ENCODE measurements at regions of chr11 and their contacts with region 1.

Region 1: DNA sequence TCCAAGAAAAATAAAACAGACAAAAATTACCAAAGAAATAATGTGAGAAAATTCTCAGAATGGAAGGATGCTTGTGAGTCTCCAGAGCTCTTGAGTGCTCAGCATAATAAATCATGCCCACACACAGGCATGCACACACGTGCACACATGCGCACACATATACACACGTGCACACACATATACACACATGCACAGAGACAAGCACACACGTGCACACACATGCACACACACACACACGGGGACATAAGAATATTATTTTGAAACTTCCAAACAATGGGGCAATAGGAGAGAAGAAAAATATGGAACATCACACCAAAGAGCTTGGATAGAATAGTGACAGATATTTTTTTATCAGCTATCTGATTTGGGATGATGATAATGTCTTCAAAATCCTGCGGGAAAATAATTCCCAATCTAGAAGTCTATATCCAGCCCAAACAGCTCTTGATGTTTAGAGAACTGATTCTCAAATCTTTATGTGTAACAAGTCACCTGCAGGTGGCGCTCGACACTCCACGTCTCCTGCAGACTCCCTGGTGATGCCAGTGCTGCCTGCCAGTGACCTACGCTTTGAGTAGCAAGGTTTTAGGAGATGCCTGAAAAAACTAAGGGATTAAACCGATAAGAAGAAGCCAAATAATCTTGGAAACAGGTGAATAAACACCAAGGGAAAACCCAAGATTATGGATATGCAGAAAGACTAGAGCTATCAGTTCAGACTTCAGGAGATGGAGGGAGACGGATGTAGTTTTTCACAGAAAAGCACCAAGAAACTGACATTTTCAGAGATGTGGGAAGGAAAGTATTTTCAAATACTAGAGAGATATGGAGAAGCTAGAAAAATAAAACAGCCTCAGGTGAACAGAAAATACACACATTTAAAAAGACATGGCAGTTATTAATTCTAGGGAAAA is 743.6 kb downstream of the ETS1 start:
- DNase-seq: peak; percentile 19 to 66
- ATAC-seq: peak in 1 of 3 donors; percentile 48
- H3K4me3 ChIP-seq: no peak overlapping the region
- H3K4me3 Mint-ChIP-seq: no peak overlapping the region
- H3K27ac ChIP-seq: no peak overlapping the region
- H3K27ac Mint-ChIP-seq: no peak overlapping the region
- H3K4me1 ChIP-seq: no peaks in the 10 kb centered on the region
- H3K4me1 Mint-ChIP-seq: no peaks in the 10 kb centered on the region
- H3K27me3 ChIP-seq: no peaks in the 10 kb centered on the region
- H3K27me3 Mint-ChIP-seq: peaks cover under 1 to 4% of the 10 kb centered on the region in 2 donors
- CTCF ChIP-seq: peak; percentile 67

Region 2: GRCh38 chr11:128021349-128022006 is 177.7 kb after region 1 on chr11:
- intact Hi-C with region 1: no loop called
- DNase-seq: no peak
- ATAC-seq: no peak
- H3K4me3 ChIP-seq: no peak overlapping the region
- H3K4me3 Mint-ChIP-seq: no peak overlapping the region
- H3K27ac ChIP-seq: no peak overlapping the region
- H3K27ac Mint-ChIP-seq: no peak overlapping the region
- H3K4me1 ChIP-seq: no peaks in the 10 kb centered on the region
- H3K4me1 Mint-ChIP-seq: no peaks in the 10 kb centered on the region
- H3K27me3 ChIP-seq: no peaks in the 10 kb centered on the region
- H3K27me3 Mint-ChIP-seq: peaks cover 16 to 18% of the 10 kb centered on the region in 2 donors
- CTCF ChIP-seq: no peak

Region 3: GRCh38 chr11:128412847-128413791 is 569.4 kb after region 1 on chr11:
- intact Hi-C with region 1: no loop called
- DNase-seq: no peak
- ATAC-seq: no peak
- H3K4me3 ChIP-seq: no peak overlapping the region
- H3K4me3 Mint-ChIP-seq: no peak overlapping the region
- H3K27ac ChIP-seq: no peak overlapping the region
- H3K27ac Mint-ChIP-seq: no peak overlapping the region
- H3K4me1 ChIP-seq: no peaks in the 10 kb centered on the region
- H3K4me1 Mint-ChIP-seq: peaks cover 0 to 12% of the 10 kb centered on the region in 2 donors
- H3K27me3 ChIP-seq: no peaks in the 10 kb centered on the region
- H3K27me3 Mint-ChIP-seq: peaks cover 4 to 5% of the 10 kb centered on the region in 2 donors
- CTCF ChIP-seq: no peak

Region 4: DNA sequence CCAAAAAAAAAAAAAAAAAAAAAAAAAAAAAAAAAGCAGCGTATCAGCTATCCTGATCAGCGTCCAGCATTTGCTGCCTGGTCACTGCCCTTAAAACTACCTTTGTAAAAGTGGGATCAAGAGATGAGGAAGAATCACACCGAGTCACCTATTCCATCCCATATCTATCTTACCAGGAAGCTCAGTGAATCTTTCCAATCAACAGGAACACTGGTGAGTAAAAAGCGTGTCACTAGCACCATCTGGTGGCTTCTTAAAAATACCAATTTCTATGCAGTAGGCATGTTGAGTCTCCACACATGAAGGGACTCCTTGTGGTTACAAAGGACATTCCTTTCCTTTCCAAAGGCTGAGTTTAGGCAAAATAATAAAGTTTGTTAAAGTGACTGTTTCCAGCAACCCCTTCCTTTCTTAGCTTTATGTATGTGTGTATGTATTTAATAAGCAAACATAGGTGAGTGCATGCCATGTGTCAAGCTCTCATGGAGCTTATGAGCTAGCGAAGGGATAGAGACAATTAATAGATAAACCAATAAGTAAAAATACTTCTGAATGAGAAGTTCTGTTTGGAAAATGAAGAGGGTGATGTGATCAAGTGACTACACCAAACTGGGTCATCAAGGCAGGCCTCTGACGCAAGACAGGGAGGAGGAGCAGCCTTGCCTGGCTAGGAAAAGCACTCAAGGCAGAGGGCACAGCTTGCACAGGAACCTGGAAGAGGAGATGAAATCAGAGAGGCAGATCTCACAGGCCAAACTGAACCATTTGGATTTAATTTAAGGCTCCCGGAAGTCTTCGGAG is 1112.9 kb after region 1 on chr11:
- intact Hi-C with region 1: loop called (anchors 5 kb)
- DNase-seq: peak in 1 of 2 donors; percentile 70
- ATAC-seq: peak in 2 of 3 donors; percentile 57 to 69
- H3K4me3 ChIP-seq: no peak overlapping the region
- H3K4me3 Mint-ChIP-seq: no peak overlapping the region
- H3K27ac ChIP-seq: no peak overlapping the region
- H3K27ac Mint-ChIP-seq: no peak overlapping the region
- H3K4me1 ChIP-seq: no peaks in the 10 kb centered on the region
- H3K4me1 Mint-ChIP-seq: peaks cover 0 to 6% of the 10 kb centered on the region in 2 donors
- H3K27me3 ChIP-seq: no peaks in the 10 kb centered on the region
- H3K27me3 Mint-ChIP-seq: peaks cover 26 to 45% of the 10 kb centered on the region in 2 donors
- CTCF ChIP-seq: peak; percentile 77

Measured in natural killer cell (primary cell).